Panc1 (cell line): ENCODE measurements at regions of chr10 and their contacts with region 1.

Region 1: GRCh38 chr10:52729271-52730104 is 43.1 kb downstream of the MBL2 start:
- DNase-seq: peak; percentile 38
- ATAC-seq: peak; percentile 94
- H3K4me3 ChIP-seq: peak overlapping the region in 1 of 2 experiments; percentile 13; a peak in 1 of 4 replicates
- H3K27ac ChIP-seq: peak overlapping the region; percentile 88
- H3K4me1 ChIP-seq: peaks cover 15% of the 10 kb centered on the region
- H3K27me3 ChIP-seq: no peaks in the 10 kb centered on the region
- CTCF ChIP-seq: peak; percentile 77; the same call in 1 of the 2 replicates

Region 2: GRCh38 chr10:52308251-52309031 is 421.0 kb before region 1 on chr10:
- CTCF ChIA-PET with region 1: interaction called, 3 read pairs
- POLR2A ChIA-PET with region 1: no interaction called
- in situ Hi-C with region 1: no loop called
- intact Hi-C with region 1: loop called (anchors 2 kb)
- DNase-seq: peak; percentile 64
- ATAC-seq: peak; percentile 86
- H3K4me3 ChIP-seq: peak overlapping the region; percentile 36 to 54
- H3K27ac ChIP-seq: peak overlapping the region; percentile 98
- H3K4me1 ChIP-seq: peaks cover 42% of the 10 kb centered on the region
- H3K27me3 ChIP-seq: no peaks in the 10 kb centered on the region
- CTCF ChIP-seq: peak; percentile 90

Region 3: DNA sequence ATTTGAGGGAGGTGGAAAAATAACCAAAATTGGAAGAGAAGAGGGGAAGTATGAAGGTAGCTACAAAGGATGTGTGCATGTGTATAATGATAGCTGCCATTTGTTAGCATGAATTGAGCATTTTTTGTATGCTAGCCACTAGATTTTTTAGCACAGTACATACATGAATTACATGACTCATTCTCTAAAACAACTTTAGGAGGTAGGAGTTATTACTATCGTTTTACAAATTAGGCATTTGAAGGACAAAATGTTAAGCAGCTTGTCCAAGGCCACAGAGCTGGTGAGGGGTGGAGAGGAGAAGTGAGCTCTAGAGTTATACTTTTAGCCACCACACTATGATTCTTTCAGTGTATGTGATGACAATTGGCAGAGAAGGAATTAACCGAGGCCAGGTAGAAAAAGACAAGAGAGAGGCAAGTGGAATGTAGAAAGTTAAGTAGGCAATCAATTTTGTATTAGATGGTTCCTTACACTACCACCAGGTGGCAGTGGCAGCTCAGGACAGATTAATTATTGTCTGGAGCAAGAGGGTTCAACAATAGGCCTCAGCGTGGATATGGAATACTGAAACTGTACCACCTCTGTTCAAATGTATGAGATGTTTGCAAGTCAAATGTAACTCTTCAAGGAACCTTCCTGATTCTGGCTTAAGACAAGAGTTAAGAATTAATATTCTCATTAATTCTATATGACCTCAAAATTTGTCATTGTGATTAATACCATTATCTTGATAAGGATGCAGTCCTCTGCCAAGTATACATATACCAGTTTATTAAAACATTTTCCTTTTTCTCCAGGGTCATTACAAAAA is 84.9 kb before region 1 on chr10:
- CTCF ChIA-PET with region 1: no interaction called
- POLR2A ChIA-PET with region 1: no interaction called
- in situ Hi-C with region 1: no loop called
- intact Hi-C with region 1: loop called (anchors 1 kb)
- DNase-seq: peak; percentile 28
- ATAC-seq: peak; percentile 75
- H3K4me3 ChIP-seq: no peak overlapping the region
- H3K27ac ChIP-seq: peak overlapping the region; percentile 52; the same call in 1 of the 2 replicates
- H3K4me1 ChIP-seq: no peaks in the 10 kb centered on the region
- H3K27me3 ChIP-seq: no peaks in the 10 kb centered on the region
- CTCF ChIP-seq: peak; percentile 83